ENCODE measurements at regions of chr18 and their contacts with region 1.

Region 1: DNA sequence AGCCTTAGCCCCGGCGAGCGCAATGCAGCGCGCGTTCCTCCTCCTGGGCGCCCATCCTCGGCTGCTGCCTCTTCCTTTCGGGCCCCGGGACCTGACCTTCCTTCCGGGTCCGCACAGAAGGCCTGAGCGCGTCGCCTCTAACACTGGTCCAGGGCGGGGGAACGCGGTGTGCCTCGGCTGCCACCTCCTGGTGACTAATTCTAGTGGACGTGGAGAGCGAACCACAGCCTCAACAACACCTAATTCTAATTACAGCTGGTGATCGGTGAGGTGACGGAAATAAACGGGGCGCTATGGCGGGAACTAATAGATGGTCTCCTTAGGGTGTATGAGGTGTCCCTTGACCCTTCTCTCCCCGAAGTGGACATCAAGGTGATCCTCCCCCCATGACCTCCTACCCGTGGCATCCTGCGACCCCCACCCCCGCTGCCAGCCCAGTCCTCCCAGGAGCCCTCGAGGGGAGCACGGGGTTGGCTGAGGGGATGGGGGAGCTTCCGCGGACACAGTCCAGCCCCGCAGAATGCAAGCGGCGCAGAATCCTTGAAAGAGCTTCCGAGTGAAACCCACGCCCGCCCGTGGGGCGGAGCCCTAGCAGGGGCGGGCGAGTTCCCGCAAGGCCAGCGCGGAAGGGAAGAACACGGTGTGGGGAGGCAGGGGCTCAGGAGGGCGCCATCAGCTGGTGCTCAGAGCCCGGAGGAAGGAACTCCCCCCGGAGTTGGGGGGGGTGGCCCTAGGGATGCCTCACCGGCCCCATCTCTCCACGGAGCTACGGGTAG is 12.8 kb upstream of the HMSD start:
- DNase-seq: peak; percentile 67
- ATAC-seq: peak; percentile 98
- H3K4me3 ChIP-seq: peak overlapping the region; percentile 73
- H3K27ac ChIP-seq: peak overlapping the region; percentile 22; the same call in 1 of the 2 replicates
- H3K4me1 ChIP-seq: peaks cover 9% of the 10 kb centered on the region
- H3K27me3 ChIP-seq: no peaks in the 10 kb centered on the region
- CTCF ChIP-seq: peak; percentile 80 to 91 (median 83)
- EP300 ChIP-seq: no peak
- POLR2A ChIP-seq: peak; percentile 78
- RAD21 ChIP-seq: peak; percentile 94

Region 2: DNA sequence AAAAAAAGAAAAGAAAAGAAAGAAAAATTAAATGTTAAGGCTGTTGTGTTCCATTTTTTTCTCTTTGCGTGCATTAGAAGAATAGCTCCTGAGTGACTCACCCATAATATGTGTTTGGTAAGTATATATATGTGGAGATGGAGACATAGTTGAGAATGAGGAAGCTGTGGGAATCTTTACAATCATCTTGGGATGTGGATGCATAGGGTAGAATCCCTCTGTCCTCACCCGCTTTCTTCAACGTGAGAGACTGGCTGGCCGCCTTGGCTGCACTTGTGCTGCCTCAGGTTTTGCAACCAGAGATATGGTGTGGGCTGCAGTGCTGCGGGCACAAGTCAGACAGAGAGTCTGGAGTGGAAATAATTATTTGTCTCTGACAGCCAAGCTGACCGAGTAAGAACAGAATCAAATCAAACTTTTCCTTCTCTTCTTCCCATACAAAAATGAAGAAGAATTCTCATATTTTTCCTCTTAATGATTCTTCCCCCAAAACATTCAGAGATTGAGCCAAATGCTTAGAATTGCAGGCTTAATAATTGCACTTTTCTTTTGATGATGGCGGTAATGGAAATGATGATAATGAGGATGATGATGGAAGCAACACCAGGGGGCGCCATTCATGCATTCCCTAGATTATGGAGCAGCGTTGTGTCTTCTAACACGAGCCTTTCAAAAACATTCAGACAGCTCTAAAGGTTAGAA is 112.7 kb before region 1 on chr18:
- CTCF ChIA-PET with region 1: interaction called, 63 read pairs
- POLR2A ChIA-PET with region 1: interaction called, 3 read pairs
- RAD21 ChIA-PET with region 1: interaction called, 23 read pairs
- SMC1A ChIA-PET with region 1: interaction called, 14 read pairs
- in situ Hi-C with region 1: no loop called
- intact Hi-C with region 1: loop called (anchors 1 kb)
- DNase-seq: no peak
- ATAC-seq: peak; percentile 68
- H3K4me3 ChIP-seq: no peak overlapping the region
- H3K27ac ChIP-seq: no peak overlapping the region
- H3K4me1 ChIP-seq: no peaks in the 10 kb centered on the region
- H3K27me3 ChIP-seq: no peaks in the 10 kb centered on the region; a peak in 1 of 4 replicates
- CTCF ChIP-seq: peak; percentile 45 to 50 (median 47); a peak in 5 of 6 replicates
- EP300 ChIP-seq: no peak
- POLR2A ChIP-seq: no peak
- RAD21 ChIP-seq: peak; percentile 50

Region 3: DNA sequence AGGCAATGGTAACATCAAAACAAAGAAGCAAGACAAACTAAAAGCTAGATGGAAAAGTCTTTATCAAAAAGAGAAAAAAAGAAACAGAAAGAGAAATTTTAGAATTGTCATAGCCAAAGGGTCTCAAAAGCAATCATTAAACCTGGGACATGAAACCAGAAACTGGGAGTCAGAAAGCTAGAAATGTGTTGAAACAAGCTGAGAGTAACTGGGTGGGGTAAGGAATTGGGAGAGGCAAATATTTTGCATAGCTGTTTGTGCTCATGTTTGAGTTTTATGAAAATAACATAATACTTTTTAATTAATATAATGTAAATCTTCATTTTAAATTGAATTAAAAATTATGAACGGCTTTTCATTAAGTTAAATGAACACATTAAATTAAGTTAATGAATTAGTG is 69.0 kb before region 1 on chr18:
- CTCF ChIA-PET with region 1: interaction called, 6 read pairs
- POLR2A ChIA-PET with region 1: no interaction called
- RAD21 ChIA-PET with region 1: interaction called, 3 read pairs
- SMC1A ChIA-PET with region 1: interaction called, 12 read pairs
- in situ Hi-C with region 1: no loop called
- intact Hi-C with region 1: no loop called
- DNase-seq: no peak
- ATAC-seq: no peak
- H3K4me3 ChIP-seq: no peak overlapping the region
- H3K27ac ChIP-seq: no peak overlapping the region
- H3K4me1 ChIP-seq: no peaks in the 10 kb centered on the region
- H3K27me3 ChIP-seq: no peaks in the 10 kb centered on the region
- CTCF ChIP-seq: no peak
- EP300 ChIP-seq: no peak
- POLR2A ChIP-seq: no peak
- RAD21 ChIP-seq: no peak

Region 4: GRCh38 chr18:63897072-63897471 is 39.3 kb before region 1 on chr18:
- CTCF ChIA-PET with region 1: interaction called, 185 read pairs
- POLR2A ChIA-PET with region 1: interaction called, 5 read pairs
- RAD21 ChIA-PET with region 1: interaction called, 52 read pairs
- SMC1A ChIA-PET with region 1: interaction called, 105 read pairs
- in situ Hi-C with region 1: loop called (anchors 5 kb)
- intact Hi-C with region 1: no loop called
- DNase-seq: no peak
- ATAC-seq: no peak
- H3K4me3 ChIP-seq: no peak overlapping the region
- H3K27ac ChIP-seq: no peak overlapping the region
- H3K4me1 ChIP-seq: no peaks in the 10 kb centered on the region; the same call in 1 of the 2 replicates
- H3K27me3 ChIP-seq: no peaks in the 10 kb centered on the region
- CTCF ChIP-seq: no peak
- EP300 ChIP-seq: no peak
- POLR2A ChIP-seq: no peak
- RAD21 ChIP-seq: no peak

Region 5: GRCh38 chr18:63924551-63924950 is 11.8 kb before region 1 on chr18:
- CTCF ChIA-PET with region 1: interaction called, 17 read pairs
- POLR2A ChIA-PET with region 1: interaction called, 4 read pairs
- RAD21 ChIA-PET with region 1: interaction called, 8 read pairs
- SMC1A ChIA-PET with region 1: interaction called, 37 read pairs
- in situ Hi-C with region 1: no loop called
- intact Hi-C with region 1: no loop called
- DNase-seq: no peak
- ATAC-seq: no peak
- H3K4me3 ChIP-seq: no peak overlapping the region
- H3K27ac ChIP-seq: no peak overlapping the region
- H3K4me1 ChIP-seq: no peaks in the 10 kb centered on the region
- H3K27me3 ChIP-seq: no peaks in the 10 kb centered on the region
- CTCF ChIP-seq: no peak
- EP300 ChIP-seq: no peak
- POLR2A ChIP-seq: no peak
- RAD21 ChIP-seq: no peak

Region 6: GRCh38 chr18:63963615-63964256 is 27.4 kb after region 1 on chr18:
- CTCF ChIA-PET with region 1: interaction called, 40 read pairs
- POLR2A ChIA-PET with region 1: no interaction called
- RAD21 ChIA-PET with region 1: interaction called, 17 read pairs
- SMC1A ChIA-PET with region 1: interaction called, 30 read pairs
- in situ Hi-C with region 1: no loop called
- intact Hi-C with region 1: no loop called
- DNase-seq: no peak
- ATAC-seq: peak; percentile 83
- H3K4me3 ChIP-seq: no peak overlapping the region
- H3K27ac ChIP-seq: no peak overlapping the region
- H3K4me1 ChIP-seq: no peaks in the 10 kb centered on the region
- H3K27me3 ChIP-seq: no peaks in the 10 kb centered on the region
- CTCF ChIP-seq: peak; percentile 71 to 92 (median 86)
- EP300 ChIP-seq: no peak
- POLR2A ChIP-seq: no peak
- RAD21 ChIP-seq: peak; percentile 57

Region 7: DNA sequence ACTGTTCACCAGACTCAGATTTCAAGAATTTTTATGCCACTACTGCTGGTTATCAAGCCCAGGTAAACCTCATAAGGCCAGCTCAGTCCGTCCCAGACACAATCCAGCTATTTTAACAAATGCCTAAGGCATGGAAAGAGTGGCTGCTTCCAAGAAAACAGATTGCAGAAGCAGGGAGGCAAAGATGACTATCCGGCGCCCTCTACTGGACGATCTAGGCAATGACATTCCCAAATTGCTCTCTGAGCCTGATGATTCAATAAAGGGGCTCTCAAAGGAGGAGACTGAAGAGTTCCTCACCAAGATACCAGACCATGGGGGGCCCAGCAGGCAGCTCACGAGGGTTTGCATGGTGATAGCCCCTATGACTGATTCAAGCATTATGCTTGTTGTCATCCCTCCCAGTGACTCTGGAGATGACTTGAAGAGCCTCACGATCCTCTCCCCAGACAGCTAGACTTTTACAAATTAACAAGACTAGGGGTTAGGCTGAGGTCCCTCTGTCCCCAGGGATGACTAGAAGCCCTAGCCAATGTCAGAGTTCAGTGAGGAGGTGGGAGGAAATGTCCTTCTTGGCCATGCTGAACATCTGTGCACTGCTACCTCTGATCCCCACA is 58.5 kb after region 1 on chr18:
- CTCF ChIA-PET with region 1: interaction called, 12 read pairs
- POLR2A ChIA-PET with region 1: no interaction called
- RAD21 ChIA-PET with region 1: interaction called, 3 read pairs
- SMC1A ChIA-PET with region 1: interaction called, 7 read pairs
- in situ Hi-C with region 1: no loop called
- intact Hi-C with region 1: no loop called
- DNase-seq: no peak
- ATAC-seq: peak; percentile 73
- H3K4me3 ChIP-seq: no peak overlapping the region
- H3K27ac ChIP-seq: no peak overlapping the region
- H3K4me1 ChIP-seq: no peaks in the 10 kb centered on the region
- H3K27me3 ChIP-seq: no peaks in the 10 kb centered on the region
- CTCF ChIP-seq: peak; percentile 59 to 93 (median 89)
- EP300 ChIP-seq: no peak
- POLR2A ChIP-seq: no peak
- RAD21 ChIP-seq: peak; percentile 58

Measured in GM12878 (cell line).